ENCODE measurements at regions of chr5 and their contacts with region 1.

Region 1: GRCh38 chr5:61941637-61942036 is 364.4 kb upstream of the KIF2A start:
- DNase-seq: no peak
- H3K4me3 Mint-ChIP-seq: no peak overlapping the region
- H3K27ac Mint-ChIP-seq: no peak overlapping the region
- H3K4me1 Mint-ChIP-seq: no peaks in the 10 kb centered on the region
- H3K27me3 Mint-ChIP-seq: no peaks in the 10 kb centered on the region
- CTCF ChIP-seq: no peak

Region 2: DNA sequence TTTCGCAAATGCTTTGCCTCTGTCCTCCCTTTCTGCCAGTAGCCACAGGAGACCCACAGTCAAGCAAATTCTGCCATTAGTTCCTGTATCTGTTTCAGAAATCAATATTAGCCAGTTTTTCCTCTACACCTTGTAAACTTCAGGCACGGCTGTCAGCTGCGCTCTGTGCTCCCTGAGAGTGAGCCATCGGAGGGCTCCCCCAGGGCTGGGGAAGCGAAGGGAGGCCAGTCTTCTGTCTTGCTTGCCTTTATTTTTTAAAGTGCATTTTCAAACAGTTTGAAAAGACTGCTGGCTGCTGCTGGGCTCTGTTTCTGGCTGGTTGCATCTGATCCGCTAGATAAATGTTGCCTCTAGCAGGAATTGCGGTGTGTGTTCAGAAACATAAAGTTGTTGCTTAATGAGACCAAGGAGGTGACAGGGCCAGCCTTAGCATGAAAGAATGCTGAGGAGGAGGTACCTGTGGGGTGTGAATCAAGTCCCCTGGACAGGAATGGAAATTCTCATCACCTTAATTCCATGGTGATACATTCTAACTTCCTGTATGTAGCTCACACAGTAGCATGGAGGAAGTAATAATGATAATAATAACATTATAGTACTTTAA is 57.3 kb before region 1 on chr5:
- CTCF ChIA-PET with region 1: no interaction called
- POLR2A ChIA-PET with region 1: no interaction called
- intact Hi-C with region 1: no loop called
- DNase-seq: no peak
- H3K4me3 Mint-ChIP-seq: no peak overlapping the region
- H3K27ac Mint-ChIP-seq: no peak overlapping the region
- H3K4me1 Mint-ChIP-seq: peaks cover 8% of the 10 kb centered on the region
- H3K27me3 Mint-ChIP-seq: no peaks in the 10 kb centered on the region
- CTCF ChIP-seq: no peak

Region 3: DNA sequence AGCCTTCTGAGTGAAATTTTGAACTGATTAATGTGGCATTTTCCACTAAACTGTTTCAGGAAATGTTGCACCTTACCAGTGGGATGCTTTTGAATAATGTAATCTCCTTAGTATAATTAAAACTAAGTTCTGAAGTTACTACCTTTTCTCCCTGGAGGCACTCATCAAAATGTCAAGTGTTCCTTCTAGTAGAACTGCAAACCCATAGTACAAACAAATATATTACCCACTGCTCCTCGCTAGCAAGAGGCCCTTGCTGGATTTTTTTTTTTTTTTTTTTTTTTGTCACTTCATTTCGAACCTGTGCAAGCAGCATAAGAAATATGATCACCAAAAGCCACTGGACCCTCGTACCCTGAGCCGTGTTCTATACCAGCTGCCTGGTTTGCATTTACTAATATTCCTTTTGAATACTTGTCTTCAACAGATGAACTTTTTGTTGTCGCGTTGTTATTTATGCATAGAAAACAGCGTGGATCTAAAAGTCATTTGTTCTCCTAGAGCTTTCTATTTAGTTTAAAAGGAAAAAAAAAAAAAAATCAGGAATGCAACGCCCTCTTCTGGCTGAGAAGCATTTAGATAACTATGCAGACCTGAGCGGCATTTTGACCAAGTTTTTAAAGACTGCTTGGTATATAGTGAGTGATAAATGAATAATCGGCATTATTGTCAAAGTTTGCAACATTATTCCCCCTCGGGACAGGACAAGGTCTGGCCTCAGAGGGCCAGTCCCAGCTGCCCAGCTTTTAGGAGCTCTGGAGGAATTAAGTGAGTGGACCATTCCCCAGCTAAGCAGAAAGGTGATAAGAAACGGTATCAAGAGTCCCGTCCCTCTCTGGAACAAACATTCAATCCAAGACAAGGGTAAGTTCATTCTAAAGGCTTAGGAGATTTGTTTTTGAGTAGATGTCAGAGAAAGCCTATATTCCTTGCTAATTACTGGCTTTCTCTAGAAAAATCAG is 201.9 kb after region 1 on chr5:
- CTCF ChIA-PET with region 1: interaction called, 43 read pairs
- POLR2A ChIA-PET with region 1: no interaction called
- intact Hi-C with region 1: loop called (anchors 1 kb)
- DNase-seq: peak; percentile 49
- H3K4me3 Mint-ChIP-seq: no peak overlapping the region
- H3K27ac Mint-ChIP-seq: no peak overlapping the region
- H3K4me1 Mint-ChIP-seq: peaks cover 12% of the 10 kb centered on the region
- H3K27me3 Mint-ChIP-seq: no peaks in the 10 kb centered on the region
- CTCF ChIP-seq: peak; percentile 60

Region 4: GRCh38 chr5:62214701-62215100 is 273.1 kb after region 1 on chr5:
- CTCF ChIA-PET with region 1: no interaction called
- POLR2A ChIA-PET with region 1: no interaction called
- intact Hi-C with region 1: loop called (anchors 10 kb)
- DNase-seq: peak; percentile 22
- H3K4me3 Mint-ChIP-seq: no peak overlapping the region
- H3K27ac Mint-ChIP-seq: no peak overlapping the region
- H3K4me1 Mint-ChIP-seq: no peaks in the 10 kb centered on the region
- H3K27me3 Mint-ChIP-seq: no peaks in the 10 kb centered on the region
- CTCF ChIP-seq: no peak

Region 5: GRCh38 chr5:62256161-62257019 is 314.8 kb after region 1 on chr5:
- CTCF ChIA-PET with region 1: no interaction called
- POLR2A ChIA-PET with region 1: no interaction called
- intact Hi-C with region 1: no loop called
- DNase-seq: no peak
- H3K4me3 Mint-ChIP-seq: no peak overlapping the region
- H3K27ac Mint-ChIP-seq: no peak overlapping the region
- H3K4me1 Mint-ChIP-seq: no peaks in the 10 kb centered on the region
- H3K27me3 Mint-ChIP-seq: no peaks in the 10 kb centered on the region
- CTCF ChIP-seq: no peak

Measured in MCF 10A (cell line).